ENCODE measurements at regions of chr5 and their contacts with region 1.

Region 1: DNA sequence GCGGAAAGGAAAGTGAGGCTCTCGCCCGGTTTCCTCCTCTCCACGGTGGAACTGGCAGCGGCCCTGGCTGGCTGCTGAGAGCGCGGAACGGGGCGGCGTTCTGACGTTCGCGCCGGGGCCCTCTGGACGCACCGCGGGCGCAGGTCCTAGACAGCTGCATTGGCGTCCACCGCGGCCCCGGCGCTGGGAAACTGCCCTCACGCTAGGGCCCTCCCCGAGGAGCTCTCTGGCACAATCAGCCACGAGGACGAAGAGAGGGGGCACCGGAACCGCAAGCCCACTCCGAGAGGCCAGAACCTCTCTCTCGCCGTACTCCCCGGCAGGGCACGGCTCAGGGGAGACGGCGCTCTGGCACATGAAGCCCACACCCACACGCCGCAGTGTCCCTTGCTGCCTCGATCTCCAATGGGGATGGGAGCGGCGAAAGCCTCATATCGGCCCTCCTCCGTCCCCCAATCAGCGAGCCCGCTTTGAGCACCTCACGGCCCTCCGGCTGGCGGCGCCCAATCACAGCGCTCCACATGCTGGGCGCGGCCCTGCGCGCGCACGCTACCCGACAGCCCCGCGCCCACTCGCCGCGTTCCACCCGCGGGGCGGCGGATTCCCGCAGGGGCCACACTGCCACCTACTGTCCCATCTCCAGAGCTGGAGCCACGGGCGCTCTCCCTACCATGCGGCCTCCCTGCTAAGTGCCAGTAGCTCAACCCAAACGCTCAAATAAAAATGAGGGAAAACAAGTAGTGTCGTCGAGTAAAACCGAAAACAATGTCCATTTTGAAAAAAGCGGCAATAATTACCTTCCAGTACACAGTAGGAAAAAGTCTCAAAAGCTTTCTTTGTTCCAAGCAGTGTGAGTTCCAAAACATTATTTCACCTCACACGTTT is 11.8 kb downstream of the MRPS27 start:
- DNase-seq: peak; percentile 96 to 98 (median 98)
- H3K4me3 ChIP-seq: peak overlapping the region; percentile 49 to 92 (median 75)
- H3K27ac ChIP-seq: peak overlapping the region; percentile 80 to 99 (median 92)
- H3K27me3 ChIP-seq: no peaks in the 10 kb centered on the region
- CTCF ChIP-seq: peak; percentile 76 to 99 (median 98)

Region 2: GRCh38 chr5:72108202-72109061 is 199.8 kb before region 1 on chr5:
- intact Hi-C with region 1: loop called in 1 of 2 experiments (anchors 1 kb)
- DNase-seq: peak; percentile 67 to 86 (median 78)
- H3K4me3 ChIP-seq: peak overlapping the region; percentile 68 to 97 (median 86)
- H3K27ac ChIP-seq: peak overlapping the region; percentile 46 to 98 (median 92)
- H3K27me3 ChIP-seq: no peaks in the 10 kb centered on the region
- CTCF ChIP-seq: peak in 8 of 56 donors; percentile 9 to 29 (median 15)

Region 3: DNA sequence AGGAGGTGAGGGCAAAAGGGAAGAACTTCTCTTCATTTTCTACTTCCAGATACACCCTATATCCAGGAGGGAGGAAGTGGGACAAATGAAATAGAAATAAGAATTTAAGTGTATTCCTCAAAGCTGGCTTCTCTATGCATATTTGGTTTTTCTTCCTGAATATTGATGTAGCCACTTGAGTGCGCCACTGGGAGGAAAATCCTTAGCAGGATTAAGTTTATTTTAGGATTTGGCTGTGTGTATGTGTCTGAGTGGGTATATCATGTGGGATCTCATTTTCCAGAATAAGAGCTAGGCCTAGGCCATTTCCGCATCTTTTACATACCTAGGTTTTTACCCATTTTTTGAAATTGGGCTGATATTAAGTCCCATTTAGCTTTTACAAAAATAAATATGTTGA is 158.5 kb before region 1 on chr5:
- intact Hi-C with region 1: loop called (anchors 5 kb)
- DNase-seq: no peak
- H3K4me3 ChIP-seq: peak overlapping the region in 1 of 59 donors; percentile 5
- H3K27ac ChIP-seq: peak overlapping the region in 37 of 59 donors; percentile 2 to 79 (median 40)
- H3K27me3 ChIP-seq: no peaks in the 10 kb centered on the region
- CTCF ChIP-seq: peak in 21 of 56 donors; percentile 10 to 36 (median 22)

Region 4: GRCh38 chr5:72244862-72245371 is 63.3 kb before region 1 on chr5:
- intact Hi-C with region 1: loop called in 1 of 2 experiments (anchors 10 kb)
- DNase-seq: peak in 7 of 10 donors; percentile 42 to 62 (median 48)
- H3K4me3 ChIP-seq: peak overlapping the region in 1 of 59 donors; percentile 4
- H3K27ac ChIP-seq: peak overlapping the region in 57 of 59 donors; percentile 2 to 98 (median 87)
- H3K27me3 ChIP-seq: no peaks in the 10 kb centered on the region
- CTCF ChIP-seq: peak in 52 of 56 donors; percentile 24 to 73 (median 54)

Region 5: DNA sequence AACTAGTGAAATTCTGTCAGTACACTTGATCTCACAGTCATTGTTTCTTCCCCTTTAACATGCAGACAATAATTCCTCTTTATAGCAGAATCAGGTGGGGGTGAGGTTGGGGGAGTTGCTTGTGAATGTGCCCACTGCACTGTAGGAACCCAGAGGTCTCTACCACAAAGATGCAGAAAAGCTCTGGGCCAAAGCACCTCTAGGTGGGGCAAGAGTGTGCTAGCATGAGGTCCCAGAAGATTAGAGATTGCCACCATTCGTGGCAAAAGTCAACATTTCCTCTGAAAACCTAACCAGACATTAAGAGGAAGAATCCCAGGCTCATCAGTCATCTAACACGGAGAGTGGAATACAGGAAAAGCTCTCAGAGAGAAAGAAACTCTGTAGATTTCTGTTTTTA is 86.5 kb after region 1 on chr5:
- intact Hi-C with region 1: no loop called
- DNase-seq: no peak
- H3K4me3 ChIP-seq: no peak overlapping the region
- H3K27ac ChIP-seq: no peak overlapping the region
- H3K27me3 ChIP-seq: no peaks in the 10 kb centered on the region
- CTCF ChIP-seq: peak in 46 of 56 donors; percentile 11 to 57 (median 32)